CD8-positive, alpha-beta memory T cell (primary cell): ENCODE measurements at regions of chr19 and their contacts with region 1.

Region 1: GRCh38 chr19:49624967-49625910 is 14.7 kb downstream of the RRAS start:
- DNase-seq: no peak
- H3K4me3 ChIP-seq: no peak overlapping the region
- H3K4me3 Mint-ChIP-seq: no peak overlapping the region
- H3K27ac ChIP-seq: no peak overlapping the region
- H3K27ac Mint-ChIP-seq: peak overlapping the region in 2 of 8 donors; percentile 26 to 68
- H3K4me1 ChIP-seq: no peaks in the 10 kb centered on the region
- H3K4me1 Mint-ChIP-seq: no peaks in the 10 kb centered on the region
- H3K27me3 ChIP-seq: no peaks in the 10 kb centered on the region
- H3K27me3 Mint-ChIP-seq: no peaks in the 10 kb centered on the region

Region 2: DNA sequence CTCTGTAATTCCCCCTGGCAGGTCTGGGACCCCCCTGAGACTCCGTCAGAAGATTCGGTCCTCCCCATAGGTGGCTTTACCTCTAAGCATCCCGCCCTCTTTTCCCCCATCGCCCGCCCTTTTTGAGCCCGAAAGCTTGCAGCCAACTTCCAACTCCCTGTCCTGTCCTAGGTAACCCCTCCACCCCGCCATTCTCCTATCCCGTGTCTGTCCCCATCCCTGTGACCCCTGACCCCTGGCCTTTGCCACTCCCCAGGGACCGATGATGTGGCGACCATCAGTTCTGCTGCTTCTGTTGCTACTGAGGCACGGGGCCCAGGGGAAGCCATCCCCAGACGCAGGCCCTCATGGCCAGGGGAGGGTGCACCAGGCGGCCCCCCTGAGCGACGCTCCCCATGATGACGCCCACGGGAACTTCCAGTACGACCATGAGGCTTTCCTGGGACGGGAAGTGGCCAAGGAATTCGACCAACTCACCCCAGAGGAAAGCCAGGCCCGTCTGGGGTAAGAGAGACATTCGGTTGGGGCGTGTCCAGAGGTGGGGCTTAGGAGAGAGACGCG is 96.9 kb before region 1 on chr19:
- CTCF ChIA-PET with region 1: no interaction called
- POLR2A ChIA-PET with region 1: interaction called, 11 read pairs
- DNase-seq: no peak
- H3K4me3 ChIP-seq: peak overlapping the region; percentile 56
- H3K4me3 Mint-ChIP-seq: peak overlapping the region; percentile 40 to 85 (median 80)
- H3K27ac ChIP-seq: no peak overlapping the region
- H3K27ac Mint-ChIP-seq: peak overlapping the region in 2 of 8 donors; percentile 64 to 67
- H3K4me1 ChIP-seq: peaks cover 14% of the 10 kb centered on the region
- H3K4me1 Mint-ChIP-seq: peaks cover 14 to 23% (median 19%) of the 10 kb centered on the region in 3 donors
- H3K27me3 ChIP-seq: no peaks in the 10 kb centered on the region
- H3K27me3 Mint-ChIP-seq: peaks cover 0 to 4% of the 10 kb centered on the region in 2 donors